Mammary epithelial cell (primary cell): ENCODE measurements at regions of chr6 and their contacts with region 1.

Region 1: GRCh38 chr6:34161857-34162515 is 16.1 kb upstream of the GRM4 start:
- DNase-seq: no peak
- H3K4me3 ChIP-seq: no peak overlapping the region
- H3K27ac ChIP-seq: no peak overlapping the region
- H3K4me1 ChIP-seq: no peaks in the 10 kb centered on the region
- H3K27me3 ChIP-seq: no peaks in the 10 kb centered on the region
- CTCF ChIP-seq: no peak

Region 2: GRCh38 chr6:34196126-34196830 is 34.3 kb after region 1 on chr6:
- CTCF ChIA-PET with region 1: no interaction called
- dilution Hi-C with region 1: no loop called
- in situ Hi-C with region 1: no loop called
- intact Hi-C with region 1: loop called (anchors 2 kb)
- DNase-seq: peak; percentile 45
- H3K4me3 ChIP-seq: peak overlapping the region; percentile 18 to 47 (median 40)
- H3K27ac ChIP-seq: no peak overlapping the region
- H3K4me1 ChIP-seq: peaks cover 11% of the 10 kb centered on the region
- H3K27me3 ChIP-seq: no peaks in the 10 kb centered on the region
- CTCF ChIP-seq: peak; percentile 71 to 98

Region 3: GRCh38 chr6:34484899-34485298 is 322.9 kb after region 1 on chr6:
- CTCF ChIA-PET with region 1: no interaction called
- dilution Hi-C with region 1: no loop called
- in situ Hi-C with region 1: no loop called
- intact Hi-C with region 1: no loop called
- DNase-seq: peak; percentile 76
- H3K4me3 ChIP-seq: no peak overlapping the region
- H3K27ac ChIP-seq: no peak overlapping the region
- H3K4me1 ChIP-seq: peaks cover 7% of the 10 kb centered on the region
- H3K27me3 ChIP-seq: no peaks in the 10 kb centered on the region
- CTCF ChIP-seq: no peak

Region 4: GRCh38 chr6:35139908-35140655 is 978.1 kb after region 1 on chr6:
- CTCF ChIA-PET with region 1: no interaction called
- dilution Hi-C with region 1: no loop called
- in situ Hi-C with region 1: no loop called
- intact Hi-C with region 1: loop called (anchors 5 kb)
- DNase-seq: peak; percentile 36
- H3K4me3 ChIP-seq: no peak overlapping the region
- H3K27ac ChIP-seq: no peak overlapping the region
- H3K4me1 ChIP-seq: no peaks in the 10 kb centered on the region
- H3K27me3 ChIP-seq: no peaks in the 10 kb centered on the region
- CTCF ChIP-seq: peak; percentile 87 to 89